ENCODE measurements at regions of chr1 and their contacts with region 1.

Region 1: GRCh38 chr1:234722904-234723720 is 113.1 kb upstream of the IRF2BP2 start:
- DNase-seq: no peak

Region 2: GRCh38 chr1:234599617-234600417 is 123.3 kb before region 1 on chr1:
- CTCF ChIA-PET with region 1: interaction called, 3 read pairs
- POLR2A ChIA-PET with region 1: interaction called, 11 read pairs
- DNase-seq: peak; percentile 74

Region 3: GRCh38 chr1:234699795-234700665 is 23.1 kb before region 1 on chr1:
- CTCF ChIA-PET with region 1: interaction called, 3 read pairs
- POLR2A ChIA-PET with region 1: interaction called, 53 read pairs
- DNase-seq: peak; percentile 56

Region 4: DNA sequence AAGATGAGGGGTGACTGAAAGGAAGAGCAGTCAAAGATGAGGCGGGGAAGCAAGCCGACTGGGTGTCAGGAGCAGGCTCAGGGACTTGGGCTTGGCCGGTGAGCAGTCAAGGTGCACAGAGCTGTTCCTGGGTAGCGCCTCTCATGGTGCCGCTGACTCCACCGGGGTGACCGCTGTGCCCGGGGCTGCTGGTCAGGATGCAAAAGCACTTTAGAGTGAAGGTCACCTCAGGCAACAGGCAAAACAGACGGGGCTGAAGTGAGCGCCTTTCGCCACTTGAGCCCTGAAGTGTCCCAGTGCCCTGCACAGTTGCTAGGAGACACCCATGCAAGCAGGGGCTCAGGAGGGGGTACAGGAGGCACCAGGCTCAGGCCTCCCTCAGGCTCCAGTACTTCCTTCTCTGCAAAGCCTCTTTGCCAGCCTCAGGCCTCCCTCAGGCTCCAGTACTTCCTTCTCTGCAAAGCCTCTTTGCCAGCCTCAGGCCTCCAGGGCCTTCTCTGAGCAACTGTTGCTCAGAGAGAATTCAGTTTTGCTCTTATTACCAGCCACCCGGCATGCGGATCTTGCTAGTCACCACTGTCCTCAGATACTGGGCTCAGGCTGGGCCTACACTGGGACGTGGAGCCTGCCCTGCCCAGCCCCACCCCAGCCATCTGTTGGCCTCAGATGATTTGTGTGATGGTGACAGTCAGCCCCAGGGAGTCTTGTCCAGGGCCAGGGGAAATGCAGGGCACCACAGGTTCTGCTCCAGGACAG is 13.5 kb before region 1 on chr1:
- CTCF ChIA-PET with region 1: interaction called, 3 read pairs
- POLR2A ChIA-PET with region 1: interaction called, 53 read pairs
- DNase-seq: no peak

Region 5: GRCh38 chr1:234737967-234738314 is 14.8 kb after region 1 on chr1:
- CTCF ChIA-PET with region 1: interaction called, 4 read pairs
- POLR2A ChIA-PET with region 1: interaction called, 12 read pairs
- DNase-seq: no peak

Region 6: GRCh38 chr1:234743791-234744611 is 20.9 kb after region 1 on chr1:
- CTCF ChIA-PET with region 1: interaction called, 3 read pairs
- POLR2A ChIA-PET with region 1: interaction called, 21 read pairs
- DNase-seq: no peak

Measured in HEK293T (cell line).